T-cell (primary cell): ENCODE measurements at regions of chr4 and their contacts with region 1.

Region 1: GRCh38 chr4:185096032-185096653 is 46.9 kb upstream of the SLC25A4 start:
- DNase-seq: peak in 16 of 35 experiments; percentile 3 to 53 (median 9)
- ATAC-seq: no peak
- H3K4me3 ChIP-seq: no peak overlapping the region
- H3K4me3 Mint-ChIP-seq: no peak overlapping the region
- H3K27ac ChIP-seq: no peak overlapping the region
- H3K27ac Mint-ChIP-seq: no peak overlapping the region
- H3K4me1 ChIP-seq: no peaks in the 10 kb centered on the region
- H3K4me1 Mint-ChIP-seq: no peaks in the 10 kb centered on the region
- H3K27me3 ChIP-seq: peaks cover 0 to 25% of the 10 kb centered on the region in 2 experiments
- H3K27me3 Mint-ChIP-seq: peaks cover 16 to 40% of the 10 kb centered on the region in 2 donors

Region 2: DNA sequence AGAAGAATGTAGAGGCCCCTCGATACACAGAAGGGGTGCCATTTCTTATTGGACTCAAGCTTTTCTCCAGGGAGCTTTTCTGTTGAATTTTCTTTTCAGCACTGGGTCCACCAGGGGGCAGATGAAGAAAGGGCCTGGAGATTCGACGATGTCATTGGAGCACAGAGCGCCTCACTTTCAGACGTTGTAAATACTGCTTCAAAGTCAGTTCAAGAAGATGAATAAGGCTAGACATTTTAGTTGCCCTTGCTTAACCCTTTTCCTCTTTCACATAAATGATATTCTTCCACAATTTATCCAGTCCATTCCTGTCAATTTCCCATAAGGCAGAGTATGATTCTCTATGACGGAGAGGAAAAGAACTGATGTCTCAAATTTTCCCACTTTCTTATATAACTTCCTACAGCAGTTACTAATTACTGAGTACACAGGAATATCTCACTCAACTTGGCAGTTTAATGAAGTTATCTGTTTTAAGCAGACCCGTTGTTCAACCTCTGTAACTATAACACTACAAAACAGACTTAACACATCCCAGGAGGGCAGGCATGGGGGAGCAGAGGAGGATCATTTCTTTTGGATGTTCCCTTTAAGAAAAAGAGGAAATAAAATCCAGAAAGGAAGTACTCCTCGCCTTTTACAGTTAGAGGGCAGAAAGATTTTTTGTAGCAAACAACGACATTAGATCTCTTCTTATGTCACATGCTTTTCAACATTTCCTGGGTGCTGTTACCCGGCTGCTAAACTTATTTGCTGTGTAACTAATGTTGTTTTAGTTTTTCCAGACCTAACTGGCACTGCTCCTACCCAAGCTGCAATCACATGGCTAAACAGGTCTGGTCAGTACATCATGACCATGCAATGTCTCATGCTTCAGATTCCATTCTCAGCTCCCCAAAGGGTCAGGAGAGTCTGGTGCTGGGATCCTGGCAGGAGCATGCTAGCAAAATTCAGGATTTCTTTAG is 350.0 kb before region 1 on chr4:
- CTCF ChIA-PET with region 1: interaction called in 1 of 2 experiments, 12 read pairs
- POLR2A ChIA-PET with region 1: no interaction called
- DNase-seq: peak; percentile 42 to 82 (median 65)
- ATAC-seq: peak; percentile 81 to 94 (median 88)
- H3K4me3 ChIP-seq: no peak overlapping the region
- H3K4me3 Mint-ChIP-seq: peak overlapping the region in 2 of 3 donors; percentile 36 to 72
- H3K27ac ChIP-seq: peak overlapping the region; percentile 11
- H3K27ac Mint-ChIP-seq: peak overlapping the region; percentile 50 to 80
- H3K4me1 ChIP-seq: peaks cover 14 to 15% of the 10 kb centered on the region in 2 experiments
- H3K4me1 Mint-ChIP-seq: peaks cover 11 to 17% (median 15%) of the 10 kb centered on the region in 3 donors
- H3K27me3 ChIP-seq: no peaks in the 10 kb centered on the region
- H3K27me3 Mint-ChIP-seq: peaks cover 0 to 3% of the 10 kb centered on the region in 2 donors